CD4-positive, alpha-beta memory T cell (primary cell): ENCODE measurements at regions of chr17 and their contacts with region 1.

Region 1: DNA sequence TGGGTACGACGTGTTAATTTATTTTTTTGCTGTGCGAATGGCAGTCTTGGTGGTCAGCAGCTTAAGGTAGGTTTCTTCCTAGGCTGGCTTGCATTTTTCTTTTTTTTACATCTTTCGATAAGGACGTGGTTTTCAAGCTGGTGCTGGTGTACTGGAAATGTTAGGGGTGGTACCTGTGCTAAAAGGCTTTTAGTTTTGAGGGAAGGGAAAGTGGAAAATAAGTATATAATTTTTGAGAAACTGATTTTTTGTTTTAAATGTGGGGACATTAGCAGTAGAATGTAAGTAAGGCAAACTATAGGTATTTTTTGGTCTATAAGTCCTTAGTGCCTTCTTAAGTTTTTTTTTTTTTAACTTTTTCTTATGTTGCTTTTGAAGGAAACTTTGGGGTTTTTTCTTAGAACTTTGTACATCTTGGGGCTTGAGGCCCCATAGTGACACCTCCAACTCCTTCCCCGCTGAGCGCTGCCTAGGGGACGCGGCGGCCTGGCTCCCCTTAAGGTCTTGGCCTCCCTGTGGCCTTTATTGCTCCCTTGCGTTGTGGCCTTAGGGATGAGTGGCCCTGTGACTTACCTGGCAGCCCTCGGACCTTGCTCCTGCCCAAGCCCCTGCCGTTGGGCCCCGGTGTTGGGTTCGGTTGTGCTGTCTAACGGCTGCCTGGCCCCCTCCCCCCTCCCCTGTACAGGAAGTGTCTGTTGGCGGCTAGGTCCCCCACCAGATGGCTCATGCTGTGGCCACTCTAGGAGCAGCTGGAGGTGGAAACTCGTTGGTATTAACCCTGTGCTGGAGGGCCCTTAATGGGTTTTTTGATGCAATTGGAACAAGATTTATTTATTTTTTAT is 88.0 kb upstream of the RPRML start:
- DNase-seq: peak; percentile 80 to 87 (median 84)
- H3K4me3 ChIP-seq: peak overlapping the region; percentile 73 to 88
- H3K4me3 Mint-ChIP-seq: peak overlapping the region; percentile 92 to 97 (median 95)
- H3K27ac ChIP-seq: peak overlapping the region; percentile 66
- H3K27ac Mint-ChIP-seq: peak overlapping the region; percentile 84 to 97 (median 94)
- H3K4me1 ChIP-seq: peaks cover 18% of the 10 kb centered on the region
- H3K4me1 Mint-ChIP-seq: peaks cover 29 to 39% (median 31%) of the 10 kb centered on the region in 4 donors
- H3K27me3 ChIP-seq: no peaks in the 10 kb centered on the region
- H3K27me3 Mint-ChIP-seq: no peaks in the 10 kb centered on the region

Region 2: GRCh38 chr17:47099987-47100711 is 33.1 kb after region 1 on chr17:
- CTCF ChIA-PET with region 1: interaction called, 3 read pairs
- POLR2A ChIA-PET with region 1: interaction called, 3 read pairs
- intact Hi-C with region 1: loop called (anchors 2 kb)
- DNase-seq: peak; percentile 86 to 93 (median 89)
- H3K4me3 ChIP-seq: peak overlapping the region; percentile 77 to 88
- H3K4me3 Mint-ChIP-seq: peak overlapping the region; percentile 97 to 100 (median 100)
- H3K27ac ChIP-seq: peak overlapping the region; percentile 71
- H3K27ac Mint-ChIP-seq: peak overlapping the region; percentile 76 to 100 (median 99)
- H3K4me1 ChIP-seq: peaks cover 17% of the 10 kb centered on the region
- H3K4me1 Mint-ChIP-seq: peaks cover 14 to 33% (median 23%) of the 10 kb centered on the region in 4 donors
- H3K27me3 ChIP-seq: no peaks in the 10 kb centered on the region
- H3K27me3 Mint-ChIP-seq: no peaks in the 10 kb centered on the region

Region 3: GRCh38 chr17:47821424-47822391 is 754.6 kb after region 1 on chr17 and contains the start of gene OSBPL7:
- CTCF ChIA-PET with region 1: no interaction called
- POLR2A ChIA-PET with region 1: no interaction called
- intact Hi-C with region 1: loop called (anchors 10 kb)
- DNase-seq: peak; percentile 72 to 88 (median 76)
- H3K4me3 ChIP-seq: peak within 1 kb of the TSS; percentile 90 to 93
- H3K4me3 Mint-ChIP-seq: peak within 1 kb of the TSS; percentile 94 to 99 (median 97)
- H3K27ac ChIP-seq: peak within 1 kb of the TSS; percentile 69
- H3K27ac Mint-ChIP-seq: peak within 1 kb of the TSS; percentile 86 to 98 (median 96)
- H3K4me1 ChIP-seq: peaks cover 25% of the 10 kb centered on the region
- H3K4me1 Mint-ChIP-seq: peaks cover 12 to 26% (median 21%) of the 10 kb centered on the region in 4 donors
- H3K27me3 ChIP-seq: no peaks in the 10 kb centered on the region
- H3K27me3 Mint-ChIP-seq: no peaks in the 10 kb centered on the region
- total RNA-seq, gene OSBPL7: 46.5 to 50.4 TPM